Lower leg skin (tissue), 4 donors: ENCODE measurements at regions of chr12 and their contacts with region 1.

Region 1: GRCh38 chr12:91704446-91704845 is 441.2 kb downstream of the BTG1 start:
- DNase-seq: no peak
- H3K4me3 ChIP-seq: no peak overlapping the region
- CTCF ChIP-seq: no peak
- POLR2A ChIP-seq: no peak

Region 2: DNA sequence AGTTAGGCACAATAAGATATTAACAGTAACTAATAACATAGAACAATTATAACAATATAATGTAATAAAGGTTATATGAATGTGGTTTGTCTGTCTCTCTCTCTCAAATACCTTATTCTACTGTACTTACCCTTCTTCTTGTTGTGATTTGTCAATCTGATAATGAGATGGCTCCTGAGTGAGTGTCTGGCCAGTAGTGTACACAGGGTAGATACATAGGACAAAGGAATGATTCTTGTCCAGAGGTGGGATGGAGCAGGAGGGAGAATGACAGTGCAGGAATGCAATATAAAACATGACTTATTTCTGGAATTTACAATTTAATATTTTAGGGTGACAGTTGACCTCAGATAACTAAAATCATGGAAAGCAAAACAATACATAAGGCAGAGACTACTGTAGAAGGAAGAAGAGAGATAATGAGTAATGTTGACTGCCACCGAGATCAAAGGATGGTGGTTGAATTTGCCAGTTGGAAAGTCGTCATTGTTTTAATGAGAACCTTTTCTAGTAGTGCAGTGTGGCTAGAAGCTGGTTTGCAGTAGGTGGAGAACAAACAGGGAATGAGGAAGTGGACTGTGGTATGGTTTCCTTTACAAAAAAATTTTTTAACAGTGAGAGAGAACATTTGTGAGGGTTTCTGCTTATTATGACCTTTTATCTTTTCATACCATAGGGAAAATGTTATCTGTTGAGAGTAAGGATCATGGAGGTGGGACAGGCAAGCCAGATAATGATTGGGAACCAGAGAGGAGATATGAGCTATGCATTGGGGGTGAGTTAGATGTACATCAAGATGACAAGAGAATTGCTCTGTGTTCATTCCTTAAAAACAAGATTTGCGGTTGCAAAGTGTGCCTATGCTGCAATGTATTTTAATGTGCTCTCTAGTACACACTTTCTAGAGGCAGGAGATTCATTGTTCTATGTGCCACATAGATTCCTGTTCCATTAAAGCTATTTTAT is 17.1 kb before region 1 on chr12:
- intact Hi-C with region 1: no loop called
- DNase-seq: no peak
- H3K4me3 ChIP-seq: no peak overlapping the region
- CTCF ChIP-seq: no peak
- POLR2A ChIP-seq: no peak

Region 3: DNA sequence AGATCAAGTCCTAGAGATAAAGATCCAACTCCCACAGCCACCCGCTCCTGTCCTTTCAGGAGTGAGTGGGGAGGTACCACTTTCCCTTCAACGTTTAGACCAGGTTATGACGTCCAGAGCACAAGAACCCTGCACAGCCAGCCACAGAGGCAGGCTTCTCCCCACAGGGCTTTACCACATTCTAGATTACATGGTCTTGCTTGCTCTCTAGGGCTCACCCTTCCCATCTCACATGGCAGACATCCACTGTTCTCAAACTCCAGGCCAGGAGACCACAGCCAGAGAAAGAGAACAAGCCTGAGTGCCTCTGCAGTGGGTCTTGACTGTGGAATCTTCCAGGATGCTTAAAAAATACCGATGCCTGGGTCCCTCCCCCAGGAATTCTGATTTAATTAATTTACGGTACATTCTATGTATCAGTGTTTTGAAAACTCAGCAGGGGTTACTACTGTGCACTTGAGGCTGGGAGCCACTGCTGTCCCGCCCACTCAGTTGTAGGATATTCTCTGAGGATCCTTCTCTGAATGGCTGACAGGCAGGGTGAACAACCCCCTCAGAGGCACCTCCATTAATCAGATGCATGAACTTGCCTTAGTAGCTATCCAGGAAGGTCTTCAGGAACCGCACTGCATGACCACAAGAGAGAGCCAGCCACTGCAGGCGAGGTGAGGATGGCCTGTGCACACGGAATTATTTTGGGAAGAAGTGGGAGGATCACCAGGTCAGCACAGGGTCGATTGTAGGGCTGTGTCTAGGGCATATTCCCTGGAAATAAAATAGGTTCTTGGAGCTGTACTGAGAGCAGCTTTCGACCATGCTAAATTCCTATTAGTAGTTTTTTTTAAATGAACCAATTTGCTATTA is 1846.5 kb after region 1 on chr12:
- intact Hi-C with region 1: loop called (anchors 10 kb)
- DNase-seq: no peak
- H3K4me3 ChIP-seq: no peak overlapping the region
- CTCF ChIP-seq: no peak
- POLR2A ChIP-seq: no peak